H1 (cell line): ENCODE measurements at regions of chr14 and their contacts with region 1.

Region 1: DNA sequence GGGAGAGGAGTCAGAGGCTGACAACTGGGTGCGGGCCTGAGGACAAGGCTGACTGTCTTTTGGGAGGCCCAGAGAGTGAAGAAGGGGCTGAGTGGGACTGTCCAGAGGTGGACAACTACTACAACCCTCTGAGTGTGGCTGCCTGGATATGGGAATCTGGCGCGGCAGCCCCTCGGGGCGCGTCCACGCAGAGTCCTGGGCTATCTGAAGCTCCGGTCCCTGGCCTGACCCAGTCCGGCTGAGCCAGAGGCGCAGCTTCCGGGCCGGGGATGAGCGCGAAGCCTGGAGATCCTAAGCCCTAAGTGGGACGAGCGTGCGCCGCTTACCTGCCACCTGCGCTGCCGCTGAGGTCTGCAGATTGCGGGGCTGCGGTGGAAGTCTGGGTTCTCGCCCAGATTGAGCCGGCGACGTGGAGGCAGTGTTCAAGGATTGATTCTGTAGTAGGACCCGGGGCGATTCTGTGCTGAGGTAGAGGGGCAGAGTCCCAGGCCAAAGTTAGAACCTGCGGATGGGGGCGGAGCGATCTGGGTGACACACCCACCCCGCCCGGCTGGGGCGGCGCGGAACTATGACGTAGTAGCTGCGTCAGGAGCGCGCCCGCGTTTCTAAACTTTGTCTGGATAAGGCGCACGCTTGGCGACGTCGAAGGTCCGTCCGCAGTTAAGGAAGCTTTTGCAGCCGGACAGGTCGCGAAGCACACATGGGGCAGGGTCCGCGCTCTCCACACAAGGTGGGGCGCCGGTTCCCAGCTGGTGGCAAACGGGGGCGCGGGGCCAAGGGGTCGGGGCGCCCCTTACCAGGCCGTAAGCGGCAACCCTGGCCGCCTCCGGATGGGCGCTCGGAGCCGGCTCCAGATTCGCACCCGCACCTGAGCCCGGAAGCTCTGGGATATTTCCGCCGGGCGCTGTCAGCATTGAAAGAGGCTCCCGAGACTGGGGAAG is at the starts of genes DHRS1 and NOP9:
- DNase-seq: peak; percentile 61 to 99
- H3K4me3 ChIP-seq: peak within 1 kb of the TSS; percentile 76 to 91 (median 88)
- H3K27ac ChIP-seq: no peak within 1 kb of the TSS
- H3K4me1 ChIP-seq: peaks cover 0 to 7% (median 4%) of the 10 kb centered on the region in 4 experiments; a peak in 5 of 7 replicates
- H3K27me3 ChIP-seq: no peaks in the 10 kb centered on the region
- CTCF ChIP-seq: no peak
- EP300 ChIP-seq: peak in 1 of 2 experiments; percentile 10; a peak in 1 of 3 replicates
- POLR2A ChIP-seq: peak; percentile 81 to 88
- RAD21 ChIP-seq: no peak
- total RNA-seq, gene DHRS1: 8.8 and 13.4 TPM in 2 replicates
- total RNA-seq, gene NOP9: 34.8 and 39.3 TPM in 2 replicates

Region 2: GRCh38 chr14:24251880-24252288 is 47.6 kb before region 1 on chr14:
- CTCF ChIA-PET with region 1: interaction called, 163 read pairs
- POLR2A ChIA-PET with region 1: interaction called, 20 read pairs
- DNase-seq: no peak
- H3K4me3 ChIP-seq: no peak overlapping the region
- H3K27ac ChIP-seq: no peak overlapping the region
- H3K4me1 ChIP-seq: no peaks in the 10 kb centered on the region
- H3K27me3 ChIP-seq: no peaks in the 10 kb centered on the region
- CTCF ChIP-seq: peak in 1 of 3 experiments; percentile 13; a peak in 1 of 4 replicates
- EP300 ChIP-seq: no peak
- POLR2A ChIP-seq: no peak
- RAD21 ChIP-seq: no peak

Region 3: GRCh38 chr14:24259252-24259995 is 40.1 kb before region 1 on chr14:
- CTCF ChIA-PET with region 1: interaction called, 63 read pairs
- POLR2A ChIA-PET with region 1: interaction called, 3 read pairs
- DNase-seq: no peak
- H3K4me3 ChIP-seq: no peak overlapping the region
- H3K27ac ChIP-seq: no peak overlapping the region
- H3K4me1 ChIP-seq: peaks cover 0 to 2% (median 0%) of the 10 kb centered on the region in 4 experiments; a peak in 1 of 7 replicates
- H3K27me3 ChIP-seq: no peaks in the 10 kb centered on the region; a peak in 1 of 7 replicates
- CTCF ChIP-seq: no peak
- EP300 ChIP-seq: no peak
- POLR2A ChIP-seq: no peak
- RAD21 ChIP-seq: no peak

Region 4: DNA sequence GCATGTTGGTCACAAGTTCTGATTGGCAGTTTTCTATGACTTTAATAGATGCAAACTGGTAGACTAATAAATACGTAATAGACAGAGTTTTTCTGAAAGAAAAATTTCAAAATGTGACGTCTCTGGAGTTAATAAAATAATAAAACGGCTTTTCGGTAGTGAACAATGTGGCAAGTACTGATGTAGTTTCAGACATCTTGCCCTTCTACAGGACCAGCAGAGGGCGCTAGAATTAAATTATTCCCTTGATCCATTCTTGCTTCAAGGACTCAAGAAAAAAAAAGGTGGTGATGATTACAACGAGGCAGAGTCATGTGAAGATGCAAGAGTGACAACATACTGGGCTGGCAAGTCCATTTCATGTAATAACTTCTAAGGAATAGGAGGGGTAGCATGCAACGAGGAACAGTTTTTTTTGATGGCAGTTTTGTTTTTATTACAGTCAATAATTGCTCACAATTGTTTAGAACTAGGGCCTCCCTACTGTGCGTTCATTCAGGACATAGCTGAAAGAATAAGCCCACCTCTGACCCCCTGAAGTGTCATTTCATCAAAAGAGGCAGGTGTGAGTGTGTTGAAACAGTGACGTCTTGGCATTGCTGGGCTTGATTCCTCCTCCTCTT is 435.5 kb after region 1 on chr14:
- CTCF ChIA-PET with region 1: no interaction called
- POLR2A ChIA-PET with region 1: no interaction called
- DNase-seq: no peak
- H3K4me3 ChIP-seq: no peak overlapping the region
- H3K27ac ChIP-seq: no peak overlapping the region
- H3K4me1 ChIP-seq: peaks cover 0 to 3% (median 0%) of the 10 kb centered on the region in 4 experiments; a peak in 3 of 7 replicates
- H3K27me3 ChIP-seq: no peaks in the 10 kb centered on the region
- CTCF ChIP-seq: peak in 2 of 3 experiments; percentile 61 to 65; a peak in 3 of 4 replicates
- EP300 ChIP-seq: no peak
- POLR2A ChIP-seq: no peak
- RAD21 ChIP-seq: peak; percentile 70 to 75